ENCODE measurements at regions of chr20 and their contacts with region 1.

Region 1: DNA sequence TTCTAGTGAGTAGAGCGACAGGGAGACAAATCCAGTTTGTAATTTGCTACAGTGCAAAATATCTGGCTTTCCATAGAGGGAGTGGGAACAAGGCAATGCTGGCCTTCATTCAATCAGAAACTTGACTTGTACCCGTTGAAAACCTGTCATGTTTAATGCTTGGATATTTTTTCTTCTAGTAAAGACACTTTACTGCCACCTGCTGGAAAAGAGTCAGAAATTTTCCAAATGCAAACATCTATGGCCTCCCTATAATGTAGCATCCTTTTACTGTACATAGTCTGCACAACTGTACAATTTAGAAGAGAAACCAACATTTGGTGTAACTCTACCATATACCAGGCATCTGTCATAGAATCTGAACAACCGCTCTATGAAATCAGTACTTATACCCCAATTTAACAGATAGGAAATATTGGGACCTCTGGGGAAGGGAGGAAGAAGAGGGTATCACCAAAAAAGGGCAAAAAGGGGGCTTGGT is 16.7 kb upstream of the TBC1D20 start:
- DNase-seq: peak in 4 of 9 experiments; percentile 20 to 80 (median 58)
- ATAC-seq: peak; percentile 86
- H3K4me3 ChIP-seq: no peak overlapping the region
- H3K4me3 Mint-ChIP-seq: no peak overlapping the region
- H3K27ac ChIP-seq: no peak overlapping the region
- H3K27ac Mint-ChIP-seq: no peak overlapping the region
- H3K4me1 ChIP-seq: peaks cover 13% of the 10 kb centered on the region
- H3K4me1 Mint-ChIP-seq: peaks cover 19% of the 10 kb centered on the region
- H3K27me3 ChIP-seq: no peaks in the 10 kb centered on the region
- H3K27me3 Mint-ChIP-seq: no peaks in the 10 kb centered on the region
- CTCF ChIP-seq: peak; percentile 82

Region 2: GRCh38 chr20:290084-290831 is 188.7 kb before region 1 on chr20 and contains the start of gene C20orf96:
- CTCF ChIA-PET with region 1: no interaction called
- POLR2A ChIA-PET with region 1: no interaction called
- intact Hi-C with region 1: loop called in 1 of 2 experiments (anchors 1 kb)
- DNase-seq: peak; percentile 62 to 92 (median 84)
- ATAC-seq: peak; percentile 88
- H3K4me3 ChIP-seq: peak within 1 kb of the TSS; percentile 54 to 73
- H3K4me3 Mint-ChIP-seq: no peak within 1 kb of the TSS
- H3K27ac ChIP-seq: peak within 1 kb of the TSS; percentile 17 to 28
- H3K27ac Mint-ChIP-seq: no peak within 1 kb of the TSS
- H3K4me1 ChIP-seq: peaks cover 22% of the 10 kb centered on the region
- H3K4me1 Mint-ChIP-seq: peaks cover 6% of the 10 kb centered on the region
- H3K27me3 ChIP-seq: no peaks in the 10 kb centered on the region
- H3K27me3 Mint-ChIP-seq: no peaks in the 10 kb centered on the region
- CTCF ChIP-seq: peak; percentile 34
- total RNA-seq, gene C20orf96: 1.9 to 2.6 TPM

Region 3: GRCh38 chr20:407133-407952 is 71.6 kb before region 1 on chr20:
- CTCF ChIA-PET with region 1: interaction called, 6 read pairs
- POLR2A ChIA-PET with region 1: interaction called, 3 read pairs
- intact Hi-C with region 1: loop called (anchors 1 kb)
- DNase-seq: peak in 7 of 9 experiments; percentile 48 to 83 (median 68)
- ATAC-seq: peak; percentile 71
- H3K4me3 ChIP-seq: peak overlapping the region; percentile 56 to 71
- H3K4me3 Mint-ChIP-seq: peak overlapping the region; percentile 91
- H3K27ac ChIP-seq: peak overlapping the region; percentile 9 to 41
- H3K27ac Mint-ChIP-seq: peak overlapping the region; percentile 95
- H3K4me1 ChIP-seq: peaks cover 34% of the 10 kb centered on the region
- H3K4me1 Mint-ChIP-seq: peaks cover 47% of the 10 kb centered on the region
- H3K27me3 ChIP-seq: no peaks in the 10 kb centered on the region
- H3K27me3 Mint-ChIP-seq: no peaks in the 10 kb centered on the region
- CTCF ChIP-seq: peak; percentile 45

Region 4: GRCh38 chr20:438571-439469 is 40.2 kb before region 1 on chr20:
- CTCF ChIA-PET with region 1: interaction called, 14 read pairs
- POLR2A ChIA-PET with region 1: interaction called, 3 read pairs
- intact Hi-C with region 1: loop called (anchors 5 kb)
- DNase-seq: peak; percentile 18 to 86 (median 65)
- ATAC-seq: peak; percentile 80
- H3K4me3 ChIP-seq: peak overlapping the region; percentile 31 to 43
- H3K4me3 Mint-ChIP-seq: peak overlapping the region; percentile 74
- H3K27ac ChIP-seq: peak overlapping the region in 1 of 2 experiments; percentile 55
- H3K27ac Mint-ChIP-seq: peak overlapping the region; percentile 47
- H3K4me1 ChIP-seq: peaks cover 39% of the 10 kb centered on the region
- H3K4me1 Mint-ChIP-seq: peaks cover 50% of the 10 kb centered on the region
- H3K27me3 ChIP-seq: no peaks in the 10 kb centered on the region
- H3K27me3 Mint-ChIP-seq: no peaks in the 10 kb centered on the region
- CTCF ChIP-seq: no peak

Region 5: GRCh38 chr20:645318-646106 is 166.5 kb after region 1 on chr20:
- CTCF ChIA-PET with region 1: no interaction called
- POLR2A ChIA-PET with region 1: no interaction called
- intact Hi-C with region 1: no loop called
- DNase-seq: peak; percentile 31 to 74 (median 63)
- ATAC-seq: peak; percentile 89
- H3K4me3 ChIP-seq: no peak overlapping the region
- H3K4me3 Mint-ChIP-seq: no peak overlapping the region
- H3K27ac ChIP-seq: no peak overlapping the region
- H3K27ac Mint-ChIP-seq: no peak overlapping the region
- H3K4me1 ChIP-seq: peaks cover 6% of the 10 kb centered on the region
- H3K4me1 Mint-ChIP-seq: peaks cover 14% of the 10 kb centered on the region
- H3K27me3 ChIP-seq: no peaks in the 10 kb centered on the region
- H3K27me3 Mint-ChIP-seq: peaks cover 23% of the 10 kb centered on the region
- CTCF ChIP-seq: peak; percentile 95